ENCODE measurements at regions of chr16 and their contacts with region 1.

Region 1: GRCh38 chr16:67521095-67521804 is 7.4 kb upstream of the RIPOR1 start:
- DNase-seq: peak; percentile 99
- H3K4me3 Mint-ChIP-seq: peak overlapping the region; percentile 89
- H3K27ac Mint-ChIP-seq: peak overlapping the region; percentile 100
- H3K4me1 Mint-ChIP-seq: peaks cover 30% of the 10 kb centered on the region
- H3K27me3 Mint-ChIP-seq: peaks cover 18% of the 10 kb centered on the region

Region 2: DNA sequence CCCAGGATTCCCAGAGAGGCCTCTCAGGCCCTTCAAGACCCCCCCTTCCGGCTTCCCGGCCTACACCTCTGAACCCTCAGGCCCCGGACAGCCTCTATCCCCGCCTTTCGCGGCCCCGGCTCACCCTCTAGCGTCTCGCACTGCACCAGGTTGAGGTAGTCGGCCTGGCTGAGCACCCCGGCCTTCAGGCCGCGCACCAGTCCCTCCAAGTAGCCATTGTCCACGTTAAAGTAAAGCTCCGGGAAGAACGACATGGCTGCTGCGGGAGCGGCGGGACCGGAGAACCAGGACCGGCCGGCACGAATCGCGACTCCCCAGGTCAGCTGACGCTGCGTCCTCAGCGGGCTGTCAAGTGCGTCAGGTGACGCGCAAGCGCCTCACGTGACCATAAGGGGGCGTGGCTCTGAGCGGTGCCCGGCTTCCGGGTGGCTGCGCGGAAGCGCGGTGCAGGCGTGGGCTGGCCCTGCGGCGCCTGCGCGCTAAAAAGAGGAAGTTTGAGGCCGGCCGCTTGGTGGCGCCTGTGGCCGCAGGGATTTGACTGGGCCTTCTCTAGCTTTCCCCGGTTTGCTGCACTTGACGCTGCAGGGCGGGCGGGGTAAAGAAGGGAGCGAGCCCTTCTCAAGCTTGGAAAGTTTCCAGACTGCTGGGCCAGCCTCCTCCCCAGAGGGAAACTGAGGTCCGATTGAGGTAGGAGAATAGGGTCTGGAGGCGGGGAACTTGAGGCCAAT is 40.3 kb before region 1 on chr16 and contains the start of gene ATP6V0D1:
- intact Hi-C with region 1: loop called (anchors 1 kb)
- DNase-seq: peak; percentile 100
- H3K4me3 Mint-ChIP-seq: peak within 1 kb of the TSS; percentile 100
- H3K27ac Mint-ChIP-seq: peak within 1 kb of the TSS; percentile 97
- H3K4me1 Mint-ChIP-seq: peaks cover 17% of the 10 kb centered on the region
- H3K27me3 Mint-ChIP-seq: no peaks in the 10 kb centered on the region
- total RNA-seq, gene ATP6V0D1: 30.9 and 31.8 TPM in 2 replicates

Region 3: GRCh38 chr16:67504041-67505021 is 16.9 kb before region 1 on chr16:
- intact Hi-C with region 1: no loop called
- DNase-seq: peak; percentile 90
- H3K4me3 Mint-ChIP-seq: peak overlapping the region; percentile 41
- H3K27ac Mint-ChIP-seq: peak overlapping the region; percentile 83
- H3K4me1 Mint-ChIP-seq: peaks cover 32% of the 10 kb centered on the region
- H3K27me3 Mint-ChIP-seq: no peaks in the 10 kb centered on the region

Region 4: DNA sequence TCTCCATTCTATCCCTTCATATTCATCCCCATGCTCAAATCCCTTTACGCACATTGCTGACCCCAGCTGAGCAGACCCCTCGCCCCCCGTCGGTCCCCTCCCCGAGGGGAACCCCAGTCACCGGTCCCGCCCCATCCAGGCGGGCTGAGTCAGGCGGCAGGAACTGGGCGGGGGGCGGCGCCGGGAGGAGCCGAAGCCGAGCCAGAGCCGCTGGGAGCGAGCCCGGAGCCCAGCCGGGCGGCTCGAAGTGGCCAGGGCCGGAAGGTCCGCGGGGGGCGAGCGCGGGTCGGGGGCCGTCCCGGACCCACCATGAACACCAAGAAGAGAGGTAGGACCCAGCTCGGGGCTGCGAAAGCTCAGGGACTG is 16.0 kb after region 1 on chr16:
- intact Hi-C with region 1: loop called (anchors 1 kb)
- DNase-seq: peak; percentile 89
- H3K4me3 Mint-ChIP-seq: peak overlapping the region; percentile 80
- H3K27ac Mint-ChIP-seq: peak overlapping the region; percentile 39
- H3K4me1 Mint-ChIP-seq: peaks cover 30% of the 10 kb centered on the region
- H3K27me3 Mint-ChIP-seq: peaks cover 30% of the 10 kb centered on the region

Region 5: GRCh38 chr16:67645397-67646121 is 124.3 kb after region 1 on chr16:
- intact Hi-C with region 1: loop called (anchors 1 kb)
- DNase-seq: no peak
- H3K4me3 Mint-ChIP-seq: peak overlapping the region; percentile 88
- H3K27ac Mint-ChIP-seq: peak overlapping the region; percentile 88
- H3K4me1 Mint-ChIP-seq: peaks cover 17% of the 10 kb centered on the region
- H3K27me3 Mint-ChIP-seq: no peaks in the 10 kb centered on the region

Region 6: GRCh38 chr16:67667817-67668494 is 146.7 kb after region 1 on chr16:
- intact Hi-C with region 1: loop called (anchors 1 kb)
- DNase-seq: peak; percentile 94
- H3K4me3 Mint-ChIP-seq: peak overlapping the region; percentile 91
- H3K27ac Mint-ChIP-seq: no peak overlapping the region
- H3K4me1 Mint-ChIP-seq: peaks cover 22% of the 10 kb centered on the region
- H3K27me3 Mint-ChIP-seq: no peaks in the 10 kb centered on the region

Measured in activated CD4-positive, alpha-beta T cell treated with anti-CD3 and anti-CD28 coated beads, Interleukin-2, amount 10 ng/mL, durations not matched to agents 24 days and 14 days (primary cell).